ENCODE measurements at regions of chr9 and their contacts with region 1.

Region 1: GRCh38 chr9:20622330-20623020 is at the start of gene MLLT3:
- DNase-seq: peak; percentile 95 to 97 (median 95)
- H3K4me3 ChIP-seq: peak within 1 kb of the TSS; percentile 69
- H3K27ac ChIP-seq: peak within 1 kb of the TSS; percentile 23 to 79
- H3K4me1 ChIP-seq: peaks cover 2% of the 10 kb centered on the region
- H3K27me3 ChIP-seq: no peaks in the 10 kb centered on the region
- CTCF ChIP-seq: peak in 1 of 3 donors; percentile 11
- EP300 ChIP-seq: no peak
- POLR2A ChIP-seq: peak; percentile 35
- total RNA-seq, gene MLLT3: 8.7 to 15.4 (median 13.8) TPM

Region 2: GRCh38 chr9:19782005-19782404 is 840.5 kb before region 1 on chr9:
- intact Hi-C with region 1: no loop called
- DNase-seq: no peak
- H3K4me3 ChIP-seq: no peak overlapping the region
- H3K27ac ChIP-seq: no peak overlapping the region
- H3K4me1 ChIP-seq: no peaks in the 10 kb centered on the region
- H3K27me3 ChIP-seq: no peaks in the 10 kb centered on the region
- CTCF ChIP-seq: no peak
- EP300 ChIP-seq: no peak
- POLR2A ChIP-seq: no peak

Region 3: GRCh38 chr9:19925817-19926503 is 696.5 kb before region 1 on chr9:
- intact Hi-C with region 1: loop called in 2 of 4 experiments (anchors 5 to 10 kb)
- DNase-seq: peak; percentile 68 to 74 (median 72)
- H3K4me3 ChIP-seq: peak overlapping the region; percentile 32
- H3K27ac ChIP-seq: no peak overlapping the region
- H3K4me1 ChIP-seq: no peaks in the 10 kb centered on the region
- H3K27me3 ChIP-seq: no peaks in the 10 kb centered on the region
- CTCF ChIP-seq: peak; percentile 88 to 89 (median 88)
- EP300 ChIP-seq: no peak
- POLR2A ChIP-seq: no peak

Region 4: DNA sequence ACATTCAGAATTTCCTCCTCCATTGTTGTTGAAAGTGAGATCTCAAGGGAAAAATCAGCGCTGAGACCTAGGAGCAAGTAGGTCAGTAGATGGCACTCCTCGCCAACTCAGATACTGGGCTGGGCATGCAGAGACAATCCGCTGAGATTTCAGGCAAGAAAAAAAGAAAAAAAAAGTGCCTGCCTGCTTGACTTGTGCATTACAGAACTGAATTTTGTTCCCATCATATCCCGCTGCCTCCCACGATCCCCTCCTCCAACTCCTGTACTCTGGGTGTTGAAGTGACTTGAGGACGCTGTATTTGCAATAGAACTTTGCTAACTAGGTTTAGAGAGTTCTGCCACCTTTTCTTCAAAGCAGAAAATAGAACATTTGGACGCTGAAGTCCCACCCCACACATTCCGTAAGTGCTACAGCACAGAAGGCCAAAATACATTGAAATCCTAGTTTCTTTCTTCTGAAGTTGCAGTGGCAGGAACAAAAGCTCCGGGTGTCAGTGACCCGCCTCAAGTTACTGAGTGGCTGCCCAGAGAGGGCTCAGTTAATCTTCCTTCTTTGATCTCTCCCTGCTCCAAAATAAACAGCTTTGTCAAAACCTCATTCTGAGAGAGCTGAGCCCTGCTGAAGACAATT is 266.0 kb before region 1 on chr9:
- intact Hi-C with region 1: loop called (anchors 5 to 10 kb)
- DNase-seq: peak; percentile 58 to 66 (median 62)
- H3K4me3 ChIP-seq: no peak overlapping the region
- H3K27ac ChIP-seq: no peak overlapping the region
- H3K4me1 ChIP-seq: no peaks in the 10 kb centered on the region
- H3K27me3 ChIP-seq: no peaks in the 10 kb centered on the region
- CTCF ChIP-seq: peak in 1 of 3 donors; percentile 20
- EP300 ChIP-seq: no peak
- POLR2A ChIP-seq: no peak

Region 5: DNA sequence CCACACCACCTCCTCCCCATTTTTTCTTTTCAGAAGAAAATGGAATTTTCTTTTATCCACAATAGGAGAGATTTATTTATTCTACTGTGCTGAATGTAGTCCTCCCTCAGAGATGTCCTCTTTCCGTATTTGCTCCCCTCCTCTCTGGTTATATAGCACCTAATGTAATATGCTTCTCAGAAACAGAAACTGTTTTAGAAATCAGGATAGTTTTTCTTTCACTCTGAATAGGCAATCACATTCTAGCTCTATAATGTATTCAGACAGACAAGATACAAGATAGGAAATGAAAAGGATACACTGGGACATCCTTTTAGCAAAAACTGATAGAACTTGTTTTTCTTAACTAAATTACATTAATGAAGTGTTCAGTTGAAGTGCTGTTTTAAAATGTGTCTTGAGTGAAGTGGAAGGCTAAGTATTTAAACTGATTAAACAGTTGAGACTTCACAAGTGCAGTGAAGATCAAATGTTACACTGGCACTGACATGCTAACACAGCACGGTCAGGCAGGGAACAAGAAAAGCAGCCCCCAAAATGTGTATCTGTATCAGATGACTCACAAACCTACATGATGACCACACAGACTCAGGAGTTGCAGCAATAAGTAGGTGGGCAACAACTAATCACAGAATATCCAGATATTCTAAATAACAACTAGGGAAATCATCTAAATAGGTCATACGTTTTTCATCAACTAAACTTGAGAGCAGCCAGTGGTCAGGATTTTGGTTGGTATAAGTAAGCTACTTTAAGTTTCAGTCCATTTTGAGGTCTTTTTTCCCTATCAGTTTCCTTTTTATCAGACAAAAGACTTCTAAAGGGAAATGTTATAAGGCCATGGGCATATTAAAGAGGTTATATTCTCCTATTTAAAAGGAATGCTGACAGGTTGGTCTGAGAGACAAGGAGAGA is 260.6 kb before region 1 on chr9:
- intact Hi-C with region 1: loop called (anchors 5 to 10 kb)
- DNase-seq: no peak
- H3K4me3 ChIP-seq: no peak overlapping the region
- H3K27ac ChIP-seq: no peak overlapping the region
- H3K4me1 ChIP-seq: no peaks in the 10 kb centered on the region
- H3K27me3 ChIP-seq: no peaks in the 10 kb centered on the region
- CTCF ChIP-seq: no peak
- EP300 ChIP-seq: no peak
- POLR2A ChIP-seq: no peak

Region 6: DNA sequence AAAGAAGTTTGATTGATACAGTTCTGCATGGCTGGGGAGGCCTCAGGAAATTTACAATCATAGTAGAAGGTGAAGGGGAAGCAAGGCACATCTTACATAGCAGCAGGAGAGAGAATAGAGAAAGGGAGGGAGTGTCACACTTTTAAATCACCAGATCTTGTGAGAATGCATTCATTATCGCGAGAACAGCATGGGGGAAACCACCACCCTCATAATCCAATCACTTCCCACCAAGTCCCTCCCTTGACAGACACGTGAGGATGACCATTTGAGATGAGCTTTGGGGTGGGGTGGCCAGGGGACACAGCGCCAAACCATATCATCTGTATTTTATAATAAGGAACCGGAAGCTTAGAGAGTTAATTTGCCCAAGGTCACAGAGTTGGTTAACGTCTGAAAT is 47.9 kb after region 1 on chr9:
- intact Hi-C with region 1: no loop called
- DNase-seq: no peak
- H3K4me3 ChIP-seq: no peak overlapping the region
- H3K27ac ChIP-seq: no peak overlapping the region
- H3K4me1 ChIP-seq: no peaks in the 10 kb centered on the region
- H3K27me3 ChIP-seq: no peaks in the 10 kb centered on the region
- CTCF ChIP-seq: no peak
- EP300 ChIP-seq: no peak
- POLR2A ChIP-seq: no peak

Region 7: DNA sequence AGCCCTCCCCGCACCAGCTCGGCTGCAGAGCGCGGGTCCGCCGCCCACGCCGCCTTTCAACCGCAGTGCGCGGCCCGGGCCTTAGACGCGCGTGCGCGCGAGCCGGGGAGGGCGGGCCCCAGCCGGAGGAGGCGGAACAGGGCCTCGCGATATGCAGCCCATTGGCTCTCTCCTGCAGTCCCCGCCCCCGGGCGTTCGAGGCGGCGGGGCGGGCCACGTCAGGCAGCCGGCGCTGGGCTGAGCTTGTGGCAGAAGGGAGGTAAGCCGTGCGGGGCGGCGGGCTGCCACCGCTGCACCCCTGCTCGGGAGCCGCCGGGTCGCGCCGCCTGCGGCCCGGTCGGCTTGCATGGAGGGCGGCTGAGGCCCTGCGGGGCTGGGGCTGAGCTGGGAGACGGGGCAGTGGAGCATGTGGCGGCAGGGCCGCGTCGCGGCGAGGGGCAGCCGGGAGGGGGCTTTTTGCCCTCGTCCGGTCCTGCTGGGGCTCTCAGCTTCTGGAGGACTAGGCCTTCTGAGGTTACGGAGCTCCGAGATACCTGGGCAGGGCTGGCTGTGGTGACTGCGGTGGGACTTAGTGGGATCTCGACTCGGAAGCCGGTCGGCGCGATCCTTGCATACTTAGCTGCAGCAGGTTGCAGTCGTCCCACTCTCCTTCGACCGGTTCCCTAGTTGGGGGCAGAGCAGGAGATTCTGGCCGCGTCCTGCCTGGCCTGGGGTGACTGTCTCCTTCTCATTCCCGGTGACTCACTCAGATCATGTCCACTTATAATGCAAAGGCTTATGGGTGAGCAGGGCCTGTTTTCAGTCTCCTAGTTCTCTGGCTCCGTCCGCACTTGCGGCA is 61.8 kb after region 1 on chr9 and contains the start of gene FOCAD:
- intact Hi-C with region 1: loop called in 2 of 4 experiments (anchors 5 to 10 kb)
- DNase-seq: peak; percentile 93 to 96 (median 95)
- H3K4me3 ChIP-seq: peak within 1 kb of the TSS; percentile 89
- H3K27ac ChIP-seq: peak within 1 kb of the TSS; percentile 58 to 76
- H3K4me1 ChIP-seq: no peaks in the 10 kb centered on the region
- H3K27me3 ChIP-seq: no peaks in the 10 kb centered on the region
- CTCF ChIP-seq: peak in 1 of 3 donors; percentile 2
- EP300 ChIP-seq: no peak
- POLR2A ChIP-seq: peak; percentile 83
- total RNA-seq, gene FOCAD: 16.2 to 39.2 (median 29.6) TPM

Region 8: GRCh38 chr9:20941174-20941690 is 318.8 kb after region 1 on chr9:
- intact Hi-C with region 1: loop called in 2 of 4 experiments (anchors 5 to 10 kb)
- DNase-seq: peak; percentile 29 to 50 (median 41)
- H3K4me3 ChIP-seq: no peak overlapping the region
- H3K27ac ChIP-seq: no peak overlapping the region
- H3K4me1 ChIP-seq: no peaks in the 10 kb centered on the region
- H3K27me3 ChIP-seq: no peaks in the 10 kb centered on the region
- CTCF ChIP-seq: peak; percentile 60 to 85 (median 75)
- EP300 ChIP-seq: no peak
- POLR2A ChIP-seq: no peak

Region 9: GRCh38 chr9:21102305-21102704 is 479.8 kb after region 1 on chr9:
- intact Hi-C with region 1: loop called in 1 of 4 experiments (anchors 10 kb)
- DNase-seq: no peak
- H3K4me3 ChIP-seq: no peak overlapping the region
- H3K27ac ChIP-seq: no peak overlapping the region
- H3K4me1 ChIP-seq: no peaks in the 10 kb centered on the region
- H3K27me3 ChIP-seq: no peaks in the 10 kb centered on the region
- CTCF ChIP-seq: no peak
- EP300 ChIP-seq: no peak
- POLR2A ChIP-seq: no peak

Measured in ovary (tissue), 10 donors.